Cardiac septum (tissue), 1 donor: ENCODE measurements at regions of chr12 and their contacts with region 1.

Region 1: GRCh38 chr12:101839324-101840283 is 8.8 kb upstream of the GNPTAB start:
- DNase-seq: no peak

Region 2: GRCh38 chr12:101439236-101439635 is 400.4 kb before region 1 on chr12:
- intact Hi-C with region 1: no loop called
- DNase-seq: no peak

Region 3: DNA sequence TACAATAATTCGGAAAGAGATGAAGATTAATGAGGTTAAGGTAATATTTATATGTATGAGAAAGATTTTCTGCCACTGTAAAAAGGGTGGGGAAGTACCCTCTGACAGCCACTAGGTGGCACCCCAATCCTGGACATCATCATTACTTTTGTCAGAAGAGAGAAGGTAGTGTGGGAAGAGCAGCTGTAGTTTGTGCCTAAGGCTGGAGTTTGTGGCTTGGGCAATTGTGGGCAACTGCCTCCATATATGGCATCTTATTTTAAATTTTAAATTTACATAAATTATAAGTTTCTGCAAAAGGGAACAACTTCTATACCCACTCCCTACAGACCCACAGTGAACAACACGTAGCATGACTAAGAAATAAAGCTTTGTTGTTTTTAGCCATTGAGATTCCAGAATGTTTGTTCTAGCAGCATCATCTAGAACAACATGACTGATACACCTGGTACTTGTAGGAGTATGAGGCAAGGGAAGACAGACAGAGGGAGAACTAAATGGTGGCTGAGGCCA is 65.9 kb before region 1 on chr12:
- intact Hi-C with region 1: loop called (anchors 2 kb)
- DNase-seq: no peak